Breast epithelium (tissue), 4 donors: ENCODE measurements at regions of chr18 and their contacts with region 1.

Region 1: GRCh38 chr18:43108882-43109281 is 6.6 kb downstream of the RIT2 start:
- DNase-seq: no peak
- H3K4me3 ChIP-seq: no peak overlapping the region
- H3K27ac ChIP-seq: no peak overlapping the region
- H3K4me1 ChIP-seq: no peaks in the 10 kb centered on the region
- H3K27me3 ChIP-seq: no peaks in the 10 kb centered on the region
- CTCF ChIP-seq: no peak
- POLR2A ChIP-seq: no peak

Region 2: DNA sequence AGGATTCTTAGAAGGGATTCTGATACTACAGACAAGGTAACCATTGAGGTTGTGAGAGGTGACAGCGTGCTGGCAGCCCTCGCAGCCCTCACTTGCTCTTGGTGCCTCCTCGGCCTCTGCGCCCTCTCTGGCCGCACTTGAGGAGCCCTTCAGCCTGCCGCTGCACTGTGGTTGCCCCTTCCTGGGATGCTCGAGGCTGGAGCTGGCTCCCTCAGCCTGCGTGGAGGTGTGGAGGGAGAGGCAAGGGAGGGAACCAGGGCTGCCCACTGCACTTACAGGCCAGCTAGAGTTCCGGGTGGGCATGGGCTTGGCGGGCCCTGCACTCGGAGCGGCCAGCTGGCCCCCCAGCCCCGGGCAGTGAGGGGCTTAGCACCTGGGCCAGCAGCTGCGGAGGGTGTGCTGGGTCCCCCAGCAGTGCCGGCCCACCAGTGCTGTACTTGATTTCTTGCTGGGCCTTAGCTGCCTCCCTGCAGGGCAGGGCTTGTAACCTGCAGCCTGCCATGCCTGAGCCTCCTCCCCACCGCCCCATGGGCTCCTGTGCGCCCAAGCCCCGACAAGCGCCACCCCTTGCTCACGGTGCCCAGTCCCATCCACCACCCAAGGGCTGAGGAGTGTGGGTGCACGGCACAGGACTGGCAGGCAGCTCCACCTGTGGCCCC is 30.5 kb after region 1 on chr18:
- intact Hi-C with region 1: loop called (anchors 2 kb)
- DNase-seq: no peak
- H3K4me3 ChIP-seq: no peak overlapping the region
- H3K27ac ChIP-seq: no peak overlapping the region
- H3K4me1 ChIP-seq: no peaks in the 10 kb centered on the region
- H3K27me3 ChIP-seq: no peaks in the 10 kb centered on the region
- CTCF ChIP-seq: no peak
- POLR2A ChIP-seq: no peak